ENCODE measurements at regions of chr17 and their contacts with region 1.

Region 1: DNA sequence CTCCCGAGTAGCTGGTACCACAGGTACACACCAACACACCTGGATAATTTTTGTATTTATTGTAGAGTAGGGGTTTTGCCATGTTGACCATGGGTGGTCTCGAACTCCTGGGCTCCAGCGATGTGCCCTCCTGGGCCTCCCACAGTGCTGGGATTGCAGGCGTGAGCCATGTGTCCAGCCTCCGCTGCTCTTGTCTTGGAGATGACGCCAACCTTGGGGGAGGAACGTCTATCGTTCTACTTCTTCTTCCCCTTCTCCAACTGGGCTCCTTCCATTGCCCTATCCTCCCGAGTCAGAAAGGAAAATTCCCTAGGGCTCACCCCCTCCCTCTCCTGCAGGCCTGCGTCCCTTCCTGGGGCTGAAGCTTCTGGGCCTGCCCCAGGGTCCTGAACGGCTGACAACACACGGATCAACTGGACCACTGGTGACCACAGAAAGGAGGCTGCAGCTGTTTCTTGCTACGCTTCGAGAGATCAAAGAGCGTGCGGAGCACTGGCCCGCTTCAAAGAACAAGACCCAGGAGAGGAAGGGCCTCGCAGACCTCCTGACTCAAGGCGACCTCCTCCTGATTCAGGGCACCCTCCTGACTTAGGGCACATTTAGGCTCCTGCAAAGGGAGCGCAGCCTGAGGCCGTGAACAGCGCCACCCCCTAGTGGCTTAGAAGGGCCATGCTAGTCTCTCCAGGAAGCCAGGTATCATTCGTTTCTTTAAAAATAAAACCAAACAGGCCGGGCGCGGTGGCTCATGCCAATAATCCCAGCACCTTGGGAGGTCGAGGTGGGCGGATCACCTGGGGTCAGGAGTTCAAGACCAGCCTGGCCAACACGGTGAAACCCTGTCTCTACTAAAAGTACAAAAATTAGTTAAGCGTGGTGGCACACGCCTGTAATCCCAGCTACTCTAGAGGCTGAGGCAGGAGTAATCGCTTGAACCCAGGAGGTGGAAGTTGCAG is 48.5 kb upstream of the HELZ start:
- DNase-seq: peak; percentile 34 to 62
- ATAC-seq: peak; percentile 81
- H3K4me3 ChIP-seq: peak overlapping the region in 2 of 4 donors; percentile 6 to 43
- H3K27ac ChIP-seq: no peak overlapping the region
- H3K4me1 ChIP-seq: peaks cover 11 to 15% of the 10 kb centered on the region in 2 donors
- H3K27me3 ChIP-seq: no peaks in the 10 kb centered on the region
- CTCF ChIP-seq: peak; percentile 66 to 90 (median 80)
- POLR2A ChIP-seq: no peak

Region 2: GRCh38 chr17:66727639-66728570 is 565.6 kb before region 1 on chr17:
- in situ Hi-C with region 1: loop called in 2 of 4 experiments (anchors 25 kb)
- intact Hi-C with region 1: no loop called
- DNase-seq: no peak
- ATAC-seq: no peak
- H3K4me3 ChIP-seq: no peak overlapping the region
- H3K27ac ChIP-seq: no peak overlapping the region
- H3K4me1 ChIP-seq: peaks cover 6 to 14% of the 10 kb centered on the region in 2 donors
- H3K27me3 ChIP-seq: no peaks in the 10 kb centered on the region
- CTCF ChIP-seq: peak in 4 of 5 experiments; percentile 17 to 49 (median 36)
- POLR2A ChIP-seq: no peak

Region 3: GRCh38 chr17:67221062-67221998 is 72.2 kb before region 1 on chr17:
- in situ Hi-C with region 1: loop called in 1 of 4 experiments (anchors 5 kb)
- intact Hi-C with region 1: loop called (anchors 1 kb)
- DNase-seq: peak; percentile 15 to 25
- ATAC-seq: peak; percentile 68 to 88
- H3K4me3 ChIP-seq: no peak overlapping the region
- H3K27ac ChIP-seq: peak overlapping the region in 1 of 4 donors; percentile 28
- H3K4me1 ChIP-seq: peaks cover 15 to 30% of the 10 kb centered on the region in 2 donors
- H3K27me3 ChIP-seq: no peaks in the 10 kb centered on the region
- CTCF ChIP-seq: peak in 4 of 5 experiments; percentile 14 to 50 (median 47)
- POLR2A ChIP-seq: no peak